Transverse colon (tissue), 4 donors: ENCODE measurements at regions of chrX and their contacts with region 1.

Region 1: DNA sequence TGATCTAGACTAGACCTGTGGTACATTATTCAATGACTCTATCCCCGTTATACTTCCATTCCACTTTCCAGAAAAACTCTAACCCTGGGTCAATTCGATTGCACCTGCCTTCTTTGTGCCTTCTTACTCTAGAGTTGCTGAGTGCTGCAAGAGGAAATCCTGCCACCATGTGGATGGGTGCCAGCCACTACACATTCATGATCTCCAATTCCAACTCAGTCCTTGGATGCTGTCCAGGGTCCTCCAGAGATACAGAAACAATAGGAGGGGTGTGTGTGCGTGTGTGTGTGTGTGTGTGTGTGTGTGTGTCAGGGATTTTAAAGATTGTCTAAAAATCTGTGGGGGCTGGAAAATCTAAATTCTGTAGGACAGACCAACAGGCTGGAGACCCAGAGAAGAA is 42.9 kb upstream of the INTS6L start:
- DNase-seq: peak; percentile 47
- H3K4me3 ChIP-seq: no peak overlapping the region
- H3K27ac ChIP-seq: no peak overlapping the region
- H3K4me1 ChIP-seq: no peaks in the 10 kb centered on the region
- H3K27me3 ChIP-seq: no peaks in the 10 kb centered on the region
- CTCF ChIP-seq: peak; percentile 11 to 33 (median 20)
- EP300 ChIP-seq: no peak
- POLR2A ChIP-seq: no peak

Region 2: DNA sequence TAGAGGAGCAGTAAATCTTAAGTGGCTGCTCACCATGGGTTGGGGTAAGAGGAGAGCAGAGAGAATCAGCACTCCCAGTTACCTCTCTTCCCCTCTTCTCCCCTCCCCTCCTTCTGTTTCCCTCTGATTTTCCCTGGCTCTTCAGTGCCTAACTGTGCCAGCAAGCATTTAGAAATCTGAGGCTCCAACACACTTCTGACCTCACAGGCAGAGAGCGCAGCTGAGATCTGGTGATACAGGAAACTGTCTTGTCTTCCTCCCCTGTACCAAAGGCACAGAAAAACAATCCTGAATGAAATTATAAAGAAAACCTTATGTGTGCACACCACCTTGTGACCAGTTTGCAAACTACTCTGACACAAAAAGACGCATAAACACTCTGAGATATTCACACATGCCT is 569.2 kb before region 1 on chrX:
- in situ Hi-C with region 1: no loop called
- intact Hi-C with region 1: no loop called
- DNase-seq: no peak
- H3K4me3 ChIP-seq: no peak overlapping the region
- H3K27ac ChIP-seq: no peak overlapping the region
- H3K4me1 ChIP-seq: no peaks in the 10 kb centered on the region
- H3K27me3 ChIP-seq: no peaks in the 10 kb centered on the region
- CTCF ChIP-seq: no peak
- EP300 ChIP-seq: no peak
- POLR2A ChIP-seq: no peak

Region 3: GRCh38 chrX:135185795-135186443 is 291.7 kb before region 1 on chrX:
- in situ Hi-C with region 1: loop called in 1 of 4 experiments (anchors 25 kb)
- intact Hi-C with region 1: no loop called
- DNase-seq: no peak
- H3K4me3 ChIP-seq: no peak overlapping the region
- H3K27ac ChIP-seq: no peak overlapping the region
- H3K4me1 ChIP-seq: no peaks in the 10 kb centered on the region
- H3K27me3 ChIP-seq: no peaks in the 10 kb centered on the region
- CTCF ChIP-seq: peak; percentile 10 to 34 (median 32)
- EP300 ChIP-seq: no peak
- POLR2A ChIP-seq: no peak

Region 4: DNA sequence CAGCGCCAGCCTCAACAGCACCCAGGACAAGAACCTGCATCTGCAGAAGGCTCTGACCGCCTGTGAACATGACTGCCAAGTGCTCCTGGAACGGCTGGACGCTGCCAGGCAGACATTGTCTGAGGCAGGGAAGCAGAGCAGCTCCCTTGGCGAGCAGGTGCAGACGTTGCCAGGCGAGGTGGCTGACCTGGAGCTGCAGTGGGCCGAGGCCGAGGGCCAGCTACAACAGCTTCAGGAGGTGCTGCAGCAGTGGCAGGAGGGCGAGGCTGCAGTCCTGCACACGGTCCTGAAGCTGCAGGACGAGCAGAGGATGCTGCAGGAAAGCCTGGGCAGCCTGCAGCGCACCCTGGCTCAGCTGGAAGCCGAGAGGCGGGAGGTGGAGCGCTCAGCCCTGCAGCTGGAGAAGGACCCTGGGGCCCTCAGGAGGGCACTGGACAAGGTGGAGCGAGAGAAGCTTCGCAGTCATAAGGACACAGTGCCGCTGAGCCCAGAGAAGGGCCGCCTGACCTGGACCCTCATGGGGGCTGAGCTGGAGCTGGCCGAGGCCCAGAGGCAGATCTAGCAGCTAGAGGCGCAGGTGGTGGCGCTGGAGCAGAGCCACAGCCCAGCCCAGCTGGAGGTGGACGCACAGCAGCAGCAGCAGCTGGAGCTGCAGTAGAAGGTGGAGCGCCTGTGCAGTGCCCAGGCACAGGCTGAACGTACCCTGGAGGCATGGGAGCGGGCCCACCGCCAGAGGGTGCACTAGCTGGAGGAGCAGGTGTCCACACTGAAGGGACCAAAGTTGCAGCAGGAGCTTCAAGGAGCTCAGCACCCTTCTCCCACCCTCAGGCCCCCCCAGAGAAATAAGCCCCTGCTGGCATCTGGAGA is 39.5 kb before region 1 on chrX:
- in situ Hi-C with region 1: no loop called
- intact Hi-C with region 1: no loop called
- DNase-seq: no peak
- H3K4me3 ChIP-seq: no peak overlapping the region
- H3K27ac ChIP-seq: no peak overlapping the region
- H3K4me1 ChIP-seq: no peaks in the 10 kb centered on the region
- H3K27me3 ChIP-seq: no peaks in the 10 kb centered on the region
- CTCF ChIP-seq: no peak
- EP300 ChIP-seq: no peak
- POLR2A ChIP-seq: no peak

Region 5: DNA sequence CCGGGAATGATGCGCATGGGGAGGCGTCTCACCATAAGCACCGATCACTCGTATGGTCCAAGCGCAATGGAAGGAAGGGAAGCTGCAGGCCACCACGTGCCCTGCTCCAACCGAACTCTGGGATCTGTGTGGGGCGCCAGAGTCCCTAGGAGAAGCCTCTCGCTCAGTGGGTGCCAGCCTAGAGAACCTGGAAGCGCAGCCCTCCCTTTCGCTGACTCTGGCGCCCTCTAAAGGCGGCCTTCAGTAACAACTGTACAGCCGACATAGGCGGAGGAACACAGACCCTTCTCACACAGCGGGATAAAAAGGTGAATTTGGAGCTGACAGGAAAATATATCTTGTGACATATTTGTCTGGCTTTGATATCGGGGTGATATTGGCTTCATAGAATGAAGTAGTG is 118.9 kb after region 1 on chrX:
- in situ Hi-C with region 1: loop called in 1 of 4 experiments (anchors 25 kb)
- intact Hi-C with region 1: no loop called
- DNase-seq: peak; percentile 46
- H3K4me3 ChIP-seq: no peak overlapping the region
- H3K27ac ChIP-seq: no peak overlapping the region
- H3K4me1 ChIP-seq: no peaks in the 10 kb centered on the region
- H3K27me3 ChIP-seq: no peaks in the 10 kb centered on the region
- CTCF ChIP-seq: peak; percentile 37 to 53 (median 39)
- EP300 ChIP-seq: no peak
- POLR2A ChIP-seq: no peak